BJ (cell line): ENCODE measurements at regions of chr4 and their contacts with region 1.

Region 1: DNA sequence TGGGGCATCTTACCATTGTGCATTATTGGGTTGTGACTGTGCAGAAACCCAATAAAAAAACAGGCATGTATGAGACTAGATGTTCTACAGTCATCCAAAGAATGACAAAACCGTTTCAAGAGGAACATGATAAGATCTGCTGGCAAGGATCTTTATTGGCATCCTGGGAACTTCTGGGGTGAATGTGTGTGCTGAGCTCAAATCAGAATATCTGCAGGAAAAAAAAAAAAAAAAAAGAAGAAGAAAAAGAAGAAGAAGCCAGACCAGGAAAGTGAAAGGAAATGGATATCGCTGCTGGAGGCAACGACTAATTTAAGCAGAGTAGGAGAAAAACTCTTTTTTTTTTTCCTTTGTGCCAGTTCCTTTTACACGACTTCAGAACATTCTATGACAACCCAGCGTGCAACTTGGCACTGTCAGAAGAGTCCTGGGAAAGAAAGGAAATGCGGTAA is 484.2 kb upstream of the BOD1L1 start:
- DNase-seq: peak; percentile 94
- H3K4me3 ChIP-seq: peak overlapping the region; percentile 43
- H3K27me3 ChIP-seq: no peaks in the 10 kb centered on the region
- CTCF ChIP-seq: no peak

Region 2: DNA sequence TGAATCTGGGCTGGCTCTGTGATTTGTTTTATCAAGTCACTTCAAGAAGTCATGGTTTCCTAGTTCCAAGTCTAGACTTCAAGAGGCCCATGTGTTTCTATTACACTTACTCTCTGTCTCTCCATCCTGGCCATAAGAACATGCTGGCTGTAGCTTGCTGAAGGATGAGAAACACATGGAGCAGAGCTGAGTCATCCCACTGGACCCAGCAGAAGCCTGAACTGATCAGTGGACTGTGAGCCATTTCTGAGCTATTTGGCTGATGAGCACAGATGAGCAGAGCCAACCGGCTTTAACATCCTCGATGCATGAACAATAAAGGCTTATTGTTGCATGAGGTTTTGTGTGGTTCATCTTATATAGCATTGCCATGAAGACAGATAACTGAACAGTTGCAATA is 193.6 kb before region 1 on chr4:
- CTCF ChIA-PET with region 1: no interaction called
- POLR2A ChIA-PET with region 1: interaction called, 19 read pairs
- DNase-seq: peak; percentile 96
- H3K4me3 ChIP-seq: no peak overlapping the region
- H3K27me3 ChIP-seq: no peaks in the 10 kb centered on the region
- CTCF ChIP-seq: no peak

Region 3: GRCh38 chr4:14000091-14000814 is 111.5 kb before region 1 on chr4:
- CTCF ChIA-PET with region 1: no interaction called
- POLR2A ChIA-PET with region 1: no interaction called
- DNase-seq: no peak
- H3K4me3 ChIP-seq: no peak overlapping the region
- H3K27me3 ChIP-seq: no peaks in the 10 kb centered on the region
- CTCF ChIP-seq: no peak

Region 4: GRCh38 chr4:14130551-14130950 is 18.8 kb after region 1 on chr4:
- CTCF ChIA-PET with region 1: interaction called, 3 read pairs
- POLR2A ChIA-PET with region 1: interaction called, 14 read pairs
- DNase-seq: peak; percentile 58
- H3K4me3 ChIP-seq: no peak overlapping the region
- H3K27me3 ChIP-seq: no peaks in the 10 kb centered on the region
- CTCF ChIP-seq: peak; percentile 26; the same call in 1 of the 2 replicates

Region 5: DNA sequence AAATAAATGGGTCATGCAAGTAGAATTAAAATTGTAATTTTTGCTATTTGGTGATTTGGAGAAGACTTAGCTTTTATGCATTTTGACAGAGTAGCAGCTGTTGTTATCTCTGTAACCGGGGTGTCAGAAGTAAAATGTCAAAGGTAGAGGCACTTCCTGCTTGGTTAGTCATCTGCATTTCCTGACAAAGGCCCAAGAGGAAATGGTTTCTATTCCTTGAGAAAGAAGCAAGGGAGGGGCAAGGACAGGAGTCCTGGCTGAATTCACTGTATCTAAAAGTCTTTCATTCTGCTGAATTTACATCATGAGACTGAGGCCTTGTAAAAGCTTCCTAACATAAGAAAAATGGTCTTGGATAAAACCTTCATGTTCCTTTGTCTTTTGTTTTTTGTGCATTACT is 66.7 kb after region 1 on chr4:
- CTCF ChIA-PET with region 1: no interaction called
- POLR2A ChIA-PET with region 1: no interaction called
- DNase-seq: no peak
- H3K4me3 ChIP-seq: no peak overlapping the region
- H3K27me3 ChIP-seq: no peaks in the 10 kb centered on the region
- CTCF ChIP-seq: no peak